Mammary epithelial cell (primary cell): ENCODE measurements at regions of chr4 and their contacts with region 1.

Region 1: GRCh38 chr4:78704981-78705683 is 71.0 kb upstream of the BMP2K start:
- DNase-seq: peak; percentile 58
- H3K4me3 ChIP-seq: no peak overlapping the region
- H3K27ac ChIP-seq: no peak overlapping the region
- H3K4me1 ChIP-seq: no peaks in the 10 kb centered on the region
- H3K27me3 ChIP-seq: no peaks in the 10 kb centered on the region
- CTCF ChIP-seq: no peak

Region 2: DNA sequence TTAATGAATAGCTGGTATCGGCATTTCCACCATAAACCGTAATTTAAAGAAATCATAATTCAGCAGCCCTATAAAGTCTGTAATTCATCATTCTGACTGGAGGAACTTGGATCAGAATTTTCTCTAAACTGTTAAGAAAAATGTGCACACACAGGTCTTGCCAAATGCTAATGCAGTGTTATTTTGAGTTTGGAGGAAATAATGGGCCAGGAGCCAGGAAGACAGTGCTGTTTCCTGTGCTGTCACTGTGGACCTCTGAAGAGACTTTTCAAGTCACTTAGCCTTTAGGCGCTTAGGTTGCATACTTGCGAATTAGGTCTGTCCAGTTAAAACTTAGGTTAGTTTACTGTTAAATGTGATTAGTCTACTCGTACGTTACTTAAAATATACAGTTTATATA is 291.0 kb before region 1 on chr4:
- CTCF ChIA-PET with region 1: no interaction called
- dilution Hi-C with region 1: no loop called
- in situ Hi-C with region 1: no loop called
- intact Hi-C with region 1: no loop called
- DNase-seq: no peak
- H3K4me3 ChIP-seq: no peak overlapping the region
- H3K27ac ChIP-seq: no peak overlapping the region
- H3K4me1 ChIP-seq: peaks cover 13% of the 10 kb centered on the region
- H3K27me3 ChIP-seq: no peaks in the 10 kb centered on the region
- CTCF ChIP-seq: no peak

Region 3: GRCh38 chr4:78650091-78651024 is 54.8 kb before region 1 on chr4:
- CTCF ChIA-PET with region 1: no interaction called
- dilution Hi-C with region 1: loop called (anchors 5 kb)
- in situ Hi-C with region 1: no loop called
- intact Hi-C with region 1: loop called (anchors 1 kb)
- DNase-seq: peak; percentile 79
- H3K4me3 ChIP-seq: no peak overlapping the region
- H3K27ac ChIP-seq: no peak overlapping the region
- H3K4me1 ChIP-seq: peaks cover 28% of the 10 kb centered on the region
- H3K27me3 ChIP-seq: no peaks in the 10 kb centered on the region
- CTCF ChIP-seq: no peak

Region 4: GRCh38 chr4:78669453-78669852 is 35.7 kb before region 1 on chr4:
- CTCF ChIA-PET with region 1: no interaction called
- dilution Hi-C with region 1: no loop called
- in situ Hi-C with region 1: no loop called
- intact Hi-C with region 1: no loop called
- DNase-seq: no peak
- H3K4me3 ChIP-seq: no peak overlapping the region
- H3K27ac ChIP-seq: no peak overlapping the region
- H3K4me1 ChIP-seq: no peaks in the 10 kb centered on the region
- H3K27me3 ChIP-seq: no peaks in the 10 kb centered on the region
- CTCF ChIP-seq: peak; percentile 29 to 38